IMR-90 (cell line): ENCODE measurements at regions of chr9 and their contacts with region 1.

Region 1: DNA sequence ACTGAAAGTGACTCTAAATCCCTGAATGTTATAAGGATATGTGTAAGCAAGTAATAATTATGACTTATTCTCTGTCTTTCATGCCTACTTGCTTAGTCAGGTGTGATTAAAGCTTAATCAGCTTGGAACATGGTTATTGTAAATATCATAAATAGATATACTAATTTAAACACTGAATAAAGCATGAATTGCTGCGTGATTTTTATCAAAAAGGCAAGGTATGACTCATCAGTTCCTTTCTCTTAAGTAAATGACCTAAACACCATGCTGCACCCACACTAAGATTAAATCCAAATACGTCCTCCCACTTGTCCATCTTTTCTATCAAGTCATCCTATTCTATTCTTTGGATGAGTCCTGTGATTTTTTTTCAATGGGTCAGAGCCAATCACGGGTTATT is 124.6 kb upstream of the MTAP start:
- DNase-seq: peak; percentile 94
- ATAC-seq: peak; percentile 55
- H3K4me3 ChIP-seq: peak overlapping the region; percentile 27; the same call in 1 of the 2 replicates
- H3K27ac ChIP-seq: no peak overlapping the region
- H3K4me1 ChIP-seq: peaks cover 11% of the 10 kb centered on the region
- H3K27me3 ChIP-seq: no peaks in the 10 kb centered on the region
- CTCF ChIP-seq: no peak
- POLR2A ChIP-seq: no peak
- RAD21 ChIP-seq: no peak

Region 2: GRCh38 chr9:21576331-21577189 is 101.3 kb before region 1 on chr9:
- CTCF ChIA-PET with region 1: no interaction called
- POLR2A ChIA-PET with region 1: no interaction called
- dilution Hi-C with region 1: no loop called
- in situ Hi-C with region 1: no loop called
- intact Hi-C with region 1: loop called (anchors 5 kb)
- DNase-seq: peak; percentile 87
- ATAC-seq: peak; percentile 83
- H3K4me3 ChIP-seq: peak overlapping the region; percentile 36; the same call in 1 of the 2 replicates
- H3K27ac ChIP-seq: peak overlapping the region; percentile 94
- H3K4me1 ChIP-seq: peaks cover 7% of the 10 kb centered on the region
- H3K27me3 ChIP-seq: no peaks in the 10 kb centered on the region
- CTCF ChIP-seq: no peak
- POLR2A ChIP-seq: no peak
- RAD21 ChIP-seq: no peak